Ascending aorta (tissue), 2 donors: ENCODE measurements at regions of chr20 and their contacts with region 1.

Region 1: GRCh38 chr20:1466211-1467081 is at the start of gene NSFL1C:
- DNase-seq: peak; percentile 78 to 97
- H3K4me3 ChIP-seq: peak within 1 kb of the TSS; percentile 67 to 81
- H3K27ac ChIP-seq: peak within 1 kb of the TSS; percentile 80
- H3K4me1 ChIP-seq: peaks cover 14 to 35% of the 10 kb centered on the region in 2 donors
- H3K27me3 ChIP-seq: no peaks in the 10 kb centered on the region
- CTCF ChIP-seq: peak; percentile 95 to 97 (median 95)
- total RNA-seq, gene NSFL1C: 58.5 TPM

Region 2: DNA sequence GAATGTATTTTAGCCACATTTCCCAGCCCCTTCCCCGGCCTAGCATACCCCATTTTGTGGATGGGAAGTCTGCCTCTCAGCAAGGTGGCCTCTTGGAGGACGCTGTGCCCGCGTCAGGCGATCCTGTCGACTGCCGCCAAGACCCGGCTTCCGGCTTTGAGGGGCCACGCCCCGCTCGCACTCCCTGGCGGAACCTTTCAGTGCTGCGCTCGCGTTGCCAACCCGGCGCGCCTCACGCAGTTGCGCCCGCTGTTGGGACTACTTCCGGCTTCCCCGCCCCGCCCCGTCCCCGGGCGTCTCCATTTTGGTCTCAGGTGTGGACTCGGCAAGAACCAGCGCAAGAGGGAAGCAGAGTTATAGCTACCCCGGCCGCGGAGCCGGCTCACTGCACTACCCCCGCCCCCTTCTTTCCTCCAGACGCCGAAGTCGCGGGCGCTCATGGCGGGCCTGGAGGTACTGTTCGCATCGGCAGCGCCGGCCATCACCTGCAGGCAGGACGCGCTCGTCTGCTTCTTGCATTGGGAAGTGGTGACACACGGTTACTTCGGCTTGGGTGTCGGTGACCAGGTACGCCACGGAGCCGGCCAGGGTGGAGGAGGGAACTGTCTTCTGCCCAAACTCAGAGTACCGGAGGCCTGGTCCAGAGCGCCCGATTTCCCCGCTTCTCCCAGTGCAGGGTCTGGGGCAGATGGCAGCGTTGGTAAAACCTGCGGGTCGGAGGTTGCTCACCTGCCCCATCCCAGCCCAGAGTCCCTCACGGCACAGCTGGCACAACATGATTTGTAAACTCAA is 347.9 kb before region 1 on chr20 and contains the start of gene PSMF1:
- intact Hi-C with region 1: loop called (anchors 1 kb)
- DNase-seq: peak; percentile 77 to 96
- H3K4me3 ChIP-seq: peak within 1 kb of the TSS; percentile 99
- H3K27ac ChIP-seq: peak within 1 kb of the TSS; percentile 74 to 80
- H3K4me1 ChIP-seq: peaks cover 8 to 44% of the 10 kb centered on the region in 2 donors
- H3K27me3 ChIP-seq: no peaks in the 10 kb centered on the region
- CTCF ChIP-seq: peak; percentile 3 to 28 (median 10)
- total RNA-seq, gene PSMF1: 46.8 TPM

Region 3: GRCh38 chr20:1325173-1326030 is 141.0 kb before region 1 on chr20:
- intact Hi-C with region 1: loop called (anchors 1 kb)
- DNase-seq: peak; percentile 90 to 99
- H3K4me3 ChIP-seq: peak overlapping the region; percentile 88
- H3K27ac ChIP-seq: peak overlapping the region; percentile 98 to 99
- H3K4me1 ChIP-seq: peaks cover 0 to 33% of the 10 kb centered on the region in 2 donors
- H3K27me3 ChIP-seq: no peaks in the 10 kb centered on the region
- CTCF ChIP-seq: peak in 2 of 3 experiments; percentile 24 to 30

Region 4: GRCh38 chr20:1669304-1669703 is 202.9 kb after region 1 on chr20:
- intact Hi-C with region 1: no loop called
- DNase-seq: no peak
- H3K4me3 ChIP-seq: no peak overlapping the region
- H3K27ac ChIP-seq: no peak overlapping the region
- H3K4me1 ChIP-seq: no peaks in the 10 kb centered on the region
- H3K27me3 ChIP-seq: no peaks in the 10 kb centered on the region
- CTCF ChIP-seq: no peak

Region 5: GRCh38 chr20:1894951-1895673 is 428.7 kb after region 1 on chr20 and contains the start of gene SIRPA:
- intact Hi-C with region 1: loop called (anchors 10 kb)
- DNase-seq: peak in 1 of 2 donors; percentile 84
- H3K4me3 ChIP-seq: peak within 1 kb of the TSS; percentile 80 to 97
- H3K27ac ChIP-seq: peak within 1 kb of the TSS; percentile 97
- H3K4me1 ChIP-seq: peaks cover 6 to 66% of the 10 kb centered on the region in 2 donors
- H3K27me3 ChIP-seq: no peaks in the 10 kb centered on the region
- CTCF ChIP-seq: no peak
- total RNA-seq, gene SIRPA: 72.8 TPM

Region 6: GRCh38 chr20:2523919-2524708 is 1057.7 kb after region 1 on chr20:
- intact Hi-C with region 1: loop called (anchors 5 kb)
- DNase-seq: peak; percentile 42 to 93
- H3K4me3 ChIP-seq: peak overlapping the region; percentile 84 to 94
- H3K27ac ChIP-seq: peak overlapping the region; percentile 92 to 94
- H3K4me1 ChIP-seq: peaks cover 0 to 3% of the 10 kb centered on the region in 2 donors
- H3K27me3 ChIP-seq: no peaks in the 10 kb centered on the region
- CTCF ChIP-seq: peak; percentile 90 to 99 (median 98)